Endothelial cell of umbilical vein (primary cell): ENCODE measurements at regions of chr11 and their contacts with region 1.

Region 1: DNA sequence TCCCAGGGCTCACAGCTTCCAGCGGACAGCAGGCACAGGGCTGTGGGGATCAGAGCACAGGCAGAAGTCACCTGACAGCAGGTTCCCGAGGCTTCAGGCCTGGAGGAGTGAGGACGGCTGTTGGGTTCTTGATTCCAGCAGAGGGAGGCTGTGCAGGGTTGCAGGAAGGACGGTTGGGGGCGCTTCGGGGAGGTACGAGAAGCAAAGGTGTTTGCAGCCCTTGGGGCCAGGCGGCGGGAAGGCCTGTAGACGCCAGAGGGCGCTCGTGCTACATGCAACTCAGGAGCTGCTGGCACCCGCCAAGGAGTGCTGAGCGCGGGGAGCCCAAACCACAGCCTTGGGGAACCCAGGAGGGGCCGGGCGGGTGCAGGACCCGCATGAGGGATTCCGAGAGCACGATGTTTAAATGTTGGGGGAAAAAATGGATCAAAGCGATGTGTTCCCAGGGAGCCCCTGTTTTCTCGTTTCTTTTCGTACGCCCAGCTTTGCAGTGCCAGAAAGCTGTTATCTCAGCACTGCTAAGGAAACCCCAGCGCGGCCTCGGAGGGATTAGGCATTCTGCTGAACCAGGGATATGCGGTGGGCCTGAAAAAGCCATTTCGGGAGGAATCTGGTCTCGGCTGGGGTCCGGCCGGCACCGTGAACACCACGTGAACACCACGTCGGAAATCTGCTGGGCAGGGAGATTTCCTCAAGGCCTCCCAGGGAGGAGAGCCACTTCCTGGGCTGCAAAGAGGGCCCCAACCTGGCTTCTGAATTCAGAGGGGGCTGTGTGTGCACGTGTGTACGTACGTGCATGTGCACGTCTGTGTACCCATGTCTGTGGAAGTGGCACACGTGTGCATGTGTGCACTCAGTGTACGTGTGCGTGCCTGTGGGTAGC is 88.1 kb downstream of the KCNQ1 start:
- DNase-seq: peak; percentile 87
- H3K4me3 ChIP-seq: no peak overlapping the region
- H3K27ac ChIP-seq: no peak overlapping the region
- H3K4me1 ChIP-seq: peaks cover 9% of the 10 kb centered on the region
- H3K27me3 ChIP-seq: no peaks in the 10 kb centered on the region
- CTCF ChIP-seq: peak; percentile 99
- POLR2A ChIP-seq: no peak

Region 2: DNA sequence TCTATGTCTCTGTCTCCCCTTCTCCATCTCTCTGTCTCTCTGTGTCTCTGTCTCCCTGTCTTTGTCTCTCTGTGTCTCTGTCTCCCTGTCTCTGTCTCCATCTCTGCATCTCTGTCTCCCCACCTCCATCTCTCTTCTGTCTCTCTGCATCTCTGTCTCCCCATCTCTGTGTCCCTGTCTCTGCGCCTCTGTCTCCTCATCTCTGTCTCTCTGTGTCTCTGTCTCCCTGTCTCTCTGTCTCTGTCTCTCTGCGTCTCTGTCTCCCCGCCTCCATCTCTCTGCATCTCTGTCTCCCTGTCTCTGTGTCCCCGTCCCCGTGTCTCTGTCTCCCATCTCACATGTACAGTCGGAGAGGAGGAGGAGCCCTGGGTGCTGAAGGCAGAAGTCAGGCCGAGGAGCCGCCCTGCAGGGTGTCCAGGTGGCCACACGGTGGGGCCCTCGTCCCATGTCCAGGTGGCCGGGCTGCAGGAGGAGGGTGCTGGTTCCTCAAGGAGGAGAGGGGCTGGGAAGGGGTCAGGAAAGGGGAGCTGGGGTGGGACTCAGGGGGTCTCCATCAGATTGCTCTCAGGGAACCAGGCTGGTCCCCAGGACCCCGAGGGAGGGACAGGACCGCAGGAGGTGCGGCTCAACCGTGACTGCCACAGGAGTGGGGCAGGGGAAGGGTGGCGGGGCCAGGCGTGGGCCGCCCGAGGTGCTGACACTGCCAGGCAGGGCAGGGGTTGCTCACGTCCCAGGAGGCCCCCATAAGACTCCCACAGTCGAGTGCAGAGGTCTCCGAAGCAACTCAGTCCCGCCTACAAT is 335.8 kb before region 1 on chr11:
- CTCF ChIA-PET with region 1: interaction called, 5 read pairs
- POLR2A ChIA-PET with region 1: no interaction called
- dilution Hi-C with region 1: no loop called
- intact Hi-C with region 1: loop called (anchors 5 kb)
- DNase-seq: peak; percentile 38
- H3K4me3 ChIP-seq: no peak overlapping the region
- H3K27ac ChIP-seq: no peak overlapping the region
- H3K4me1 ChIP-seq: no peaks in the 10 kb centered on the region
- H3K27me3 ChIP-seq: no peaks in the 10 kb centered on the region
- CTCF ChIP-seq: peak; percentile 63 to 81
- POLR2A ChIP-seq: no peak

Region 3: GRCh38 chr11:2428322-2428795 is 104.6 kb before region 1 on chr11:
- CTCF ChIA-PET with region 1: interaction called, 190 read pairs
- POLR2A ChIA-PET with region 1: no interaction called
- dilution Hi-C with region 1: no loop called
- intact Hi-C with region 1: loop called (anchors 1 kb)
- DNase-seq: peak; percentile 32
- H3K4me3 ChIP-seq: no peak overlapping the region
- H3K27ac ChIP-seq: no peak overlapping the region
- H3K4me1 ChIP-seq: no peaks in the 10 kb centered on the region
- H3K27me3 ChIP-seq: no peaks in the 10 kb centered on the region
- CTCF ChIP-seq: peak; percentile 76 to 84
- POLR2A ChIP-seq: no peak

Region 4: DNA sequence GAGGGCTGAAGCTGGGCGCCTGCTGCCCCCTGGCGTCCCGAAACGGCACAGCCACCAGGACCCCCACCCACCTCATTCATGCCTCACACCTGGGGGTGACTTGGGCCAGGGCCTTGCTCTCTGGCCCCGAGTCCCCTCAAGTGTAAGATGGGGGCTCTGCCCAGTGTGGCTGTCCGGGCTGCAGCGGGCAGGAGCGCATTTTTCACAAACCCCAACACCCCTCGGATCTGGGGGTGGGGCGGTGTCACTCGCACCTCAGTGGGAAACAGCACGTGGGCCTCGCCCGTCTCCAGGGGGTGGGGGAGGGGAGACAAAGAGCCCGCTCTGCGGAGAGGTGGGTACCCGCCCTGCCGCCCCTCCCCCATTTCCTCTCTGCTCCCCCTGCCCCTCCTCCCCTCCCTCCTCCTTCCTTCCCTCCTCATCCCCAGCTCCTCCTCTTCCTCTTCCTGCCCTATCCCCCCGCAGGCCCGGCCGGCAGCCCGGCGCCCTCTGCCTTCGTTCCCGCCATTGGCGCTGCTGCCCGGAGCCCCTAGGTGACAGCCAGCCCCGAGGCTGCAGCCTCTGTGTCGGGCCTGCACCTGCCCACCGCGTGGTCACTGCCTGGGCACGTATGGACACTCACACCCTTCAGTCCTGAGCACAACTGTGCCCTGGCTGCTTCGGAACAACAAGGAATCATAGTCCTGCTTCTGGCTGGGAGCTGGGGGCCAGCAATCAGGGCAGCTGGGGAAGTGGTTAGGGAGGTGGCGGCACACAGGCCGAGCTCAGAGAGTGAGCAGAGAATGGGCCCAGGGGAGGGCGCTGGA is 359.5 kb after region 1 on chr11:
- CTCF ChIA-PET with region 1: interaction called, 711 read pairs
- POLR2A ChIA-PET with region 1: interaction called, 4 read pairs
- dilution Hi-C with region 1: no loop called
- intact Hi-C with region 1: loop called (anchors 1 kb)
- DNase-seq: peak; percentile 64
- H3K4me3 ChIP-seq: peak overlapping the region in 2 of 3 experiments; percentile 29 to 36
- H3K27ac ChIP-seq: peak overlapping the region; percentile 43
- H3K4me1 ChIP-seq: peaks cover 14% of the 10 kb centered on the region
- H3K27me3 ChIP-seq: no peaks in the 10 kb centered on the region
- CTCF ChIP-seq: peak; percentile 95 to 98
- POLR2A ChIP-seq: peak; percentile 79

Region 5: GRCh38 chr11:2945031-2945756 is 412.2 kb after region 1 on chr11:
- CTCF ChIA-PET with region 1: interaction called, 13 read pairs
- POLR2A ChIA-PET with region 1: no interaction called
- dilution Hi-C with region 1: no loop called
- intact Hi-C with region 1: no loop called
- DNase-seq: peak; percentile 83
- H3K4me3 ChIP-seq: no peak overlapping the region
- H3K27ac ChIP-seq: no peak overlapping the region
- H3K4me1 ChIP-seq: peaks cover 11% of the 10 kb centered on the region
- H3K27me3 ChIP-seq: no peaks in the 10 kb centered on the region
- CTCF ChIP-seq: no peak
- POLR2A ChIP-seq: no peak

Region 6: GRCh38 chr11:3021125-3021524 is 488.2 kb after region 1 on chr11:
- CTCF ChIA-PET with region 1: interaction called, 22 read pairs
- POLR2A ChIA-PET with region 1: no interaction called
- dilution Hi-C with region 1: no loop called
- intact Hi-C with region 1: loop called (anchors 2 kb)
- DNase-seq: peak; percentile 56
- H3K4me3 ChIP-seq: no peak overlapping the region
- H3K27ac ChIP-seq: no peak overlapping the region
- H3K4me1 ChIP-seq: peaks cover 5% of the 10 kb centered on the region
- H3K27me3 ChIP-seq: no peaks in the 10 kb centered on the region
- CTCF ChIP-seq: peak; percentile 47 to 71
- POLR2A ChIP-seq: no peak